ENCODE measurements at regions of chr3 and their contacts with region 1.

Region 1: GRCh38 chr3:157532529-157533297 is 29.5 kb upstream of the VEPH1 start:
- DNase-seq: peak; percentile 94
- H3K4me3 ChIP-seq: peak overlapping the region; percentile 40 to 96 (median 86)
- H3K27ac ChIP-seq: peak overlapping the region; percentile 100
- H3K4me1 ChIP-seq: peaks cover 67% of the 10 kb centered on the region
- H3K27me3 ChIP-seq: no peaks in the 10 kb centered on the region
- CTCF ChIP-seq: peak; percentile 61 to 68
- POLR2A ChIP-seq: peak; percentile 17

Region 2: DNA sequence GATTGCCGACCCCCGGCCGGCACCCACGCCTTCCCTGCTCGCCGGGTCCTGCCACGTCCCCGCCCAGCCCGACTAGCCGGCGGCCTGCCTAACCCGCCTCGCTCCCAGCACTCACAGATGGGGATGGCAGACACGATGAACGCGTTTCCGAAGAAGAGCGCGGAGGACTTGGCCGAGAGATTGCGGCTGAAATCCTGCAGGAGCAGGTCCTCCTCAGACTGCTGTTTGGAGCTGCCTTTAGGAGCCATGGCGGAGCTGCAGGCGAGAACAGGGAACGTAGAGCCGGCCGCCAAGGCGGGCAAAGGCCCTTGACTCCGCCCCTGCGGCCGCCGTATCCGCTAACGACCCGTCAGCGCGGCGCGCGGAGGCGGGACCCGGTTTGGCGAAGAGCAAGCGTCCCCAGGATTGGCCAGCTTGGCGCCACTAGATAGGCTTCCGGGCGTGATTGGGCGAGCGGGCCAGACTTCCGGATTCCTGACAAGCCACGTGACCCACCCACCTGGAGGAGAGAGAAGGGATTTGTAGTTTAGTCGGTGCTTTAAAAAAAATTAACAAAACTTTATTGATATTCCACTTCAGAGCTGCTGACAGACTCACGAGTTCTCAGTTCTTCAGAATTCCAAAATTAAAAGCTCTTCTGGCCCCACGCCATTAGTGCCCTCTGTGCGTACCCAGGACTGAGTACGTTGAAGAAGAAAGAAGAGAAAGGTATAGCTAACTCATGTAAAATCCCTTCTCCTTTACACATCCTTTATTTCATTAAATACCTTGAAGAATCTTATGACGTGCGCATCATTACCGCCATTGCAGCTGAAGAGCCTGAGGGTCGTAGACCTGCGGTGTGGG is 977.6 kb before region 1 on chr3 and contains the start of gene SSR3:
- CTCF ChIA-PET with region 1: no interaction called
- POLR2A ChIA-PET with region 1: no interaction called
- dilution Hi-C with region 1: no loop called
- intact Hi-C with region 1: loop called (anchors 5 kb)
- DNase-seq: peak; percentile 99
- H3K4me3 ChIP-seq: peak within 1 kb of the TSS; percentile 79 to 97 (median 94)
- H3K27ac ChIP-seq: peak within 1 kb of the TSS; percentile 87
- H3K4me1 ChIP-seq: peaks cover 42% of the 10 kb centered on the region
- H3K27me3 ChIP-seq: no peaks in the 10 kb centered on the region
- CTCF ChIP-seq: no peak
- POLR2A ChIP-seq: peak; percentile 93
- total RNA-seq, gene SSR3: 355 and 370 TPM in 2 replicates

Region 3: DNA sequence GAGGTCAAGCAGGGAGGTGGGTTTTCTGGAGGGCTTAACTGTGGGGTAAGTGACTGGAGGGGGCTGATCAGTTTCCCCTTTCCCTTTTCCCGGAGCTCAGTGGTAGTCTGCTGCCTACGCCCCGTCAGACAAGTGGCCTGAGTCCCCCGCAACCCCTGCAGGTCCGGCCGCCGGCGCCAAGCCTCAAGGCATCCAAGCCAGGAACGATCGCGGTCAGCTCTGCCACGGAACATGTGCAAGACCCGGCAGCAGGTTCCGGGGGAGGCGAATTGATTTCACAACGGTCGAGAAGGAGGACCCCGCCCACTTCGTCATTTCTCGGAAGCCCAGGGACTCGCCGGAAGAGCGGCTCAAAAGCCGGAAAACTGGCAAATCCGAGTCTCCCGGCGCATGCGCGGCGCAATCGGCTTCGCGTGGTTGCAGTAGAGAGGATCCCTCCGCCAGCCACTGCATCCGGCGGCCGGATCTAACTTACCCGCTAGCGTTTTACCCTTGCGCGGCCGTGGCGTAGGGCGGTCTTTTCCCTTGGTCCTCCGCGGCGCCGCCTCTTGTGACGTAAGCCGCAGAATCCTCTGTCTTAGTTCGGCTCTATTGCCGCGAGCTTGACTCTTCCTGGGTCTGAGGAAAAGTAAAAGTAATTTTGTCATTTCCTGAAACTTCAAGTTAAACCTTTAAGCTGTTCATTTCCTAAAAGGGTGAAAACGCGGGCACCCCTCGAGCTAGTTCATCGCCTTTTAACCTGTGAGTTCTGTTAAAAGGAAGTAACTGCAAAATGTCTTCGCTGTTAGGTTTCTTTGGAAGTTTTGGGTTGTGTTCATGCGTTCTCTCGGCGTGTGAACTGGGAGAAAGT is 357.8 kb before region 1 on chr3:
- CTCF ChIA-PET with region 1: interaction called, 4 read pairs
- POLR2A ChIA-PET with region 1: no interaction called
- dilution Hi-C with region 1: no loop called
- intact Hi-C with region 1: loop called (anchors 1 kb)
- DNase-seq: peak; percentile 99
- H3K4me3 ChIP-seq: peak overlapping the region; percentile 37 to 97 (median 90)
- H3K27ac ChIP-seq: peak overlapping the region; percentile 98
- H3K4me1 ChIP-seq: peaks cover 16% of the 10 kb centered on the region
- H3K27me3 ChIP-seq: no peaks in the 10 kb centered on the region
- CTCF ChIP-seq: no peak
- POLR2A ChIP-seq: peak; percentile 95

Region 4: GRCh38 chr3:157417247-157417646 is 115.5 kb before region 1 on chr3:
- CTCF ChIA-PET with region 1: no interaction called
- POLR2A ChIA-PET with region 1: no interaction called
- dilution Hi-C with region 1: no loop called
- intact Hi-C with region 1: no loop called
- DNase-seq: peak; percentile 50
- H3K4me3 ChIP-seq: peak overlapping the region in 1 of 3 experiments; percentile 27
- H3K27ac ChIP-seq: peak overlapping the region; percentile 95
- H3K4me1 ChIP-seq: peaks cover 43% of the 10 kb centered on the region
- H3K27me3 ChIP-seq: no peaks in the 10 kb centered on the region
- CTCF ChIP-seq: no peak
- POLR2A ChIP-seq: no peak

Region 5: GRCh38 chr3:157460253-157460652 is 72.5 kb before region 1 on chr3:
- CTCF ChIA-PET with region 1: no interaction called
- POLR2A ChIA-PET with region 1: no interaction called
- dilution Hi-C with region 1: no loop called
- intact Hi-C with region 1: loop called (anchors 2 kb)
- DNase-seq: peak; percentile 90
- H3K4me3 ChIP-seq: peak overlapping the region in 1 of 3 experiments; percentile 3
- H3K27ac ChIP-seq: peak overlapping the region; percentile 60
- H3K4me1 ChIP-seq: peaks cover 36% of the 10 kb centered on the region
- H3K27me3 ChIP-seq: no peaks in the 10 kb centered on the region
- CTCF ChIP-seq: no peak
- POLR2A ChIP-seq: no peak

Region 6: DNA sequence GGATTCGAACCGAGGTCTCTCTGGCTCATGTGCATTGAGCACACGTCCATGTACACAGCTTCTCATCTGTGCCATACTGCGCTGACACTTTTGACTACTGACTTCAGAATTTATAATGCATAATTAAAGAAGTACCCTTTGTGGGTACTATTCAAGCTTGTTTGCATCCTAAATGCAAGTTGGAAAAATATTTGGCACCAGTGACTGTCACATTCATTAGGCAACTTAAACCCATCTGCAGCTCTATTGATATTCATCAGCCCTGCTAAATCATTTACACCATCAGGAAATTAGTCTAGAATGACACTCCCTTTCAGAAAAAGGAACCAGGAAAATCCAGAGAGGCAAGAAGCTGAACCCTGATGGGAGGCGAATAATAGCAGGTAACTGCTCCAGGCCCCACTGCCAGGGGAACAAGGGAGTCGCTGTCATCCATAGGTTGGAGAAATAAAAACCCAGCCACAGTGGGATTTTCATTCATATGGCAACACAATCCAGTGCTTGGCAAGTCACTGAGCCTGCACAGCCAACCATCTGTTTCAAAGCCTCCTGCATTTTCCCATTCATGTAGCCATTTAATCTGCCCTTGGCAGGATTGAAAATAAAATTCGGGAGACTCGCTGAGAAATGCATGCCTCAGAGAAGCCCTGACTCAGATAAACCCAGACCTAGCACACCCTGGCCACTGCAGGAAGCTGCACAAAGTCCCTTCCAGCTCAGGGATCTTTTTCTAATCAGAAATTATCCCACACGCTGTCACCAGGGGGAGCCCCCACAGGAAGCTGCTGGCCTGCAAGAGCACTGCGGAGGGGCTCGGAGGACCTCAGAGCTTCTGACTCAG is 73.5 kb after region 1 on chr3:
- CTCF ChIA-PET with region 1: interaction called, 45 read pairs
- POLR2A ChIA-PET with region 1: no interaction called
- dilution Hi-C with region 1: no loop called
- intact Hi-C with region 1: loop called (anchors 2 kb)
- DNase-seq: peak; percentile 73
- H3K4me3 ChIP-seq: no peak overlapping the region
- H3K27ac ChIP-seq: no peak overlapping the region
- H3K4me1 ChIP-seq: no peaks in the 10 kb centered on the region
- H3K27me3 ChIP-seq: no peaks in the 10 kb centered on the region
- CTCF ChIP-seq: peak; percentile 85 to 86
- POLR2A ChIP-seq: no peak

Region 7: GRCh38 chr3:158109804-158110657 is 577.3 kb after region 1 on chr3 and contains the start of gene RSRC1:
- CTCF ChIA-PET with region 1: interaction called, 5 read pairs
- POLR2A ChIA-PET with region 1: no interaction called
- dilution Hi-C with region 1: no loop called
- intact Hi-C with region 1: loop called (anchors 5 kb)
- DNase-seq: peak; percentile 89
- H3K4me3 ChIP-seq: peak within 1 kb of the TSS; percentile 75 to 95 (median 83)
- H3K27ac ChIP-seq: peak within 1 kb of the TSS; percentile 9
- H3K4me1 ChIP-seq: peaks cover 12% of the 10 kb centered on the region
- H3K27me3 ChIP-seq: peaks cover 23 to 46% of the 10 kb centered on the region in 2 experiments
- CTCF ChIP-seq: no peak
- POLR2A ChIP-seq: peak; percentile 74
- total RNA-seq, gene RSRC1: 24.8 and 25.4 TPM in 2 replicates

Region 8: DNA sequence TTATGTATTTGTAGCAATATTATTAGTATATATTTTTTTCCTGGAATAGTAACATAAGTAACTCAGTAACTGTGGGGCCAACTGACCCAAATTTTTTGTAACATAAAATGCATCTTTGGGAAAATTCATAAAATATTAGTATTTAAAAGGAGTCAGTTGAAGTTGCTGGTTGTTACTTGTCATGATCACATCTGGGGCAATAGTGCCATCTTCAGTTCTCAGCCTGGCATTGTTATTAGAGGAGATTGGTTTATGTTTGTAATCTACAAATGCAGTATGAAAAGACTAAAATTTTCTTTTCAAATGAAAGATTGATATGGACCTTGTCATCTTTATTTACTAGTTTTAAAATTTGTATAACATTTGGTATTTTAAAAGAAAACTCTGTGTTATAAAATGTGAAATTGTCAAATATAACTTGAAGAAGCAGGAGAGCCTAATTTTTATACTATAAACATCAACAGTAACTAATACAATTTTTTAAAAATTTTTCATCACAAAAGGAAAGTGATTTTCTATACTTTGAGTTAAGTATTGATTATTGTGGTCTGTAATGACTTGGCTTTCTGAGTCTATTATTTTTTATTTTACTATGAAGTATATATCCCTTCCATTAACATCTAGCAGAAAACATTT is 999.5 kb after region 1 on chr3:
- CTCF ChIA-PET with region 1: interaction called, 13 read pairs
- POLR2A ChIA-PET with region 1: no interaction called
- dilution Hi-C with region 1: no loop called
- intact Hi-C with region 1: no loop called
- DNase-seq: peak; percentile 72
- H3K4me3 ChIP-seq: no peak overlapping the region
- H3K27ac ChIP-seq: no peak overlapping the region
- H3K4me1 ChIP-seq: no peaks in the 10 kb centered on the region
- H3K27me3 ChIP-seq: no peaks in the 10 kb centered on the region
- CTCF ChIP-seq: peak; percentile 36 to 46
- POLR2A ChIP-seq: no peak

Measured in endothelial cell of umbilical vein (primary cell).